Activated CD4-positive, alpha-beta T cell treated with anti-CD3 and anti-CD28 coated beads for 36 hours (primary cell): ENCODE measurements at regions of chrX and their contacts with region 1.

Region 1: GRCh38 chrX:80578517-80579105 is 158.4 kb downstream of the TENT5D start:
- DNase-seq: no peak
- ATAC-seq: no peak
- H3K4me3 Mint-ChIP-seq: no peak overlapping the region
- H3K27ac Mint-ChIP-seq: no peak overlapping the region
- H3K4me1 Mint-ChIP-seq: no peaks in the 10 kb centered on the region
- H3K27me3 Mint-ChIP-seq: no peaks in the 10 kb centered on the region

Region 2: DNA sequence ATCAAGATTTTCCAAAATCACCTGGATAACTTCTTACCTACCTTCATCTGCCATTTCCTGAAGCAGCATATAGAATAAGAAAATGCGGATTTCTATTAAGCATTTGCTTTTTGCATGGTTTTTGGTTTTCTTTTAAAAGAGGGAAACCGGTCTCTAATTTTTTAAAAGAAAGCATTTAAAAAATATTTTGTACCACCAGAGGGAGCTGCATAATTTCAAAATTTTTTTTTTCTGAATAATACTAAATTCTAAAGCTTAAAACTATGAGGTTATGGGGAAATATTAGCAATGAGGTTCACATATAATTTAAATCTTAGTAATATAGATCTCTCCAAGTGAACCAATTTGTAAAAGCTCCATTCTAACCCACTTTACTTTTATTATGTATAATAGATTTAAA is 296.1 kb before region 1 on chrX:
- CTCF ChIA-PET with region 1: no interaction called
- POLR2A ChIA-PET with region 1: no interaction called
- intact Hi-C with region 1: loop called in 1 of 2 experiments (anchors 2 kb)
- DNase-seq: no peak
- ATAC-seq: no peak
- H3K4me3 Mint-ChIP-seq: no peak overlapping the region
- H3K27ac Mint-ChIP-seq: no peak overlapping the region
- H3K4me1 Mint-ChIP-seq: no peaks in the 10 kb centered on the region
- H3K27me3 Mint-ChIP-seq: no peaks in the 10 kb centered on the region

Region 3: DNA sequence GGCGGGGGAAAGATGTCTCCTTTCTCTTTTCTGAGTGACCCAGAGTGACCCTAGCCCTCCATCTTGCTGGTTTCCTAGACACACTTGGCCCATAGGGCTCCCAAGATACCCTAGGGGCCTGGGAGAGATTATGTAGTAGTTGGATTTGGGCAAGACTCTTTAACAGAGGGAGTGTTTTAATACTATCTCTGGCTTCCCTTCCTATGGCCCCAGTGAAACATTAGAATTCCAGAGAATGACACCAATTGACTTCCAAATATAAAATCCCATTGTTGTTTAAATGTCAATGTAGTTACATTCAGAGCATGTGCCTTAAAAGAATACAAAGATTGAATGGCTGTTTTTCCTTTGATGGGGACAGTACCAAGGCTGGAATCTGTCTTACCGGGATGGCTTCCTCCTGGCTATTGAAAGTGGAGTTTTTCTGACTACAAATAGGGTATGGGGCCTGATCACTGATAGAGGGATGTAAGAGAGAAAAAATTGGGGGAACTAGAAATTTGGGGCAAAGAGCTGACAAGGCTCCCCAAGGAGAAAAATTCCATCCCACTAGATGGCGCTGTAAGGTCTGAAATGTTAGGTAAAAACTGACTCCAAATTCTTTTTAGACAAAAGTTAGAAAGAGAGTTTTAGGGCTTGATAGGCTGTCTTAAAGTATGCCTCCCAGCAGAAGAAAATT is 147.6 kb before region 1 on chrX:
- CTCF ChIA-PET with region 1: interaction called, 3 read pairs
- POLR2A ChIA-PET with region 1: no interaction called
- intact Hi-C with region 1: loop called in 1 of 2 experiments (anchors 5 kb)
- DNase-seq: peak; percentile 8
- ATAC-seq: no peak
- H3K4me3 Mint-ChIP-seq: no peak overlapping the region
- H3K27ac Mint-ChIP-seq: no peak overlapping the region
- H3K4me1 Mint-ChIP-seq: no peaks in the 10 kb centered on the region
- H3K27me3 Mint-ChIP-seq: no peaks in the 10 kb centered on the region